Naive thymus-derived CD4-positive, alpha-beta T cell (primary cell): ENCODE measurements at regions of chr4 and their contacts with region 1.

Region 1: GRCh38 chr4:122716825-122717448 is 15.6 kb upstream of the BBS12 start:
- DNase-seq: peak; percentile 20 to 70 (median 63)
- ATAC-seq: peak; percentile 96
- H3K4me3 ChIP-seq: no peak overlapping the region
- H3K4me3 Mint-ChIP-seq: no peak overlapping the region
- H3K27ac ChIP-seq: no peak overlapping the region
- H3K27ac Mint-ChIP-seq: peak overlapping the region in 1 of 9 donors; percentile 46
- H3K4me1 ChIP-seq: peaks cover 0 to 5% of the 10 kb centered on the region in 2 donors
- H3K4me1 Mint-ChIP-seq: peaks cover 0 to 37% (median 12%) of the 10 kb centered on the region in 7 donors
- H3K27me3 ChIP-seq: no peaks in the 10 kb centered on the region
- H3K27me3 Mint-ChIP-seq: peaks cover 0 to 2% (median 0%) of the 10 kb centered on the region in 5 donors

Region 2: DNA sequence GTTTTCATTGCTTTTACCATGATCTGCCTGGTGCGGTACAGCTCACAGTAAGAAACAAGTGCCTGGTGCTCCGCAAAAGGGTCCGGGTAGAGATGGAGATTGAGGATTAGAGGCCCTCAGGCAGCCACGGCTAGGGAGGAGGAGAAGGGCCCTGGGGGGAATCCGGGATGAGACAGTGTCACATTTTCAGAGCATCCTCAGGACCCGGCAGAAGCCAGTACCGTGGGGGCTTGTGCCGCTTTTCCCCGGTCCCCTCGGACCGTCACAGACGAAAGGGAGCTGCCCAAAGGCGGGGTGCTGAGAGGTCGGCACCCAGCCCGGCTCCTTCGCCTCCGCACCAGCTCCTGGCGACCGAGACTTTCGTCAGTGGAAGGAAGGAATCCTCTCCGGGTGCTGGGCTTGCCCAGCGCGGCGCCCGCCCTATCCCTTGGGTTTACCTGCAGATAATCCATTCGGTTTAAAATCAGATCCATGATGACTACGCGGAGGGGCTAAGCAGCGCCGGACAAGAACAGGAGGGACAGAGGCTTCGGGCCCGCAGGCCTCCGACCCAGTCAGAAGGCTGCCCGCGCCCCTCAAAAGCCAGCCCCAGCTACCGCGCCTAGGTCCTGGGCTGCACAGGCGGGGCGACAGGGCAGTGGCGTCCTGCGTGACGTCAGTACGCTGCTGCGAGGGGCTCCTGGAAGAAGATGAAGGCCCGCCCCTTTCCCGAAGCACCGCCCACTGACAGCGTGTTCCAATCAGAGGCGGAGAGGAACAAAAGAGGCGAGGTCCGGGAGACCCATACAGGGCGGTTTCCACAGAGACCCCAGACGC is 846.9 kb before region 1 on chr4 and contains the start of gene BBS7:
- CTCF ChIA-PET with region 1: no interaction called
- POLR2A ChIA-PET with region 1: no interaction called
- intact Hi-C with region 1: loop called in 1 of 2 experiments (anchors 10 kb)
- DNase-seq: peak; percentile 79 to 93 (median 89)
- ATAC-seq: peak; percentile 98
- H3K4me3 ChIP-seq: peak within 1 kb of the TSS; percentile 99
- H3K4me3 Mint-ChIP-seq: peak within 1 kb of the TSS; percentile 88 to 98 (median 97)
- H3K27ac ChIP-seq: peak within 1 kb of the TSS; percentile 77
- H3K27ac Mint-ChIP-seq: peak within 1 kb of the TSS; percentile 69 to 95 (median 90)
- H3K4me1 ChIP-seq: peaks cover 0 to 10% of the 10 kb centered on the region in 2 donors
- H3K4me1 Mint-ChIP-seq: peaks cover 9 to 17% (median 15%) of the 10 kb centered on the region in 7 donors
- H3K27me3 ChIP-seq: no peaks in the 10 kb centered on the region
- H3K27me3 Mint-ChIP-seq: peaks cover 0 to 30% (median 12%) of the 10 kb centered on the region in 5 donors
- total RNA-seq, gene BBS7: 3.7 to 13.1 (median 8.1) TPM

Region 3: DNA sequence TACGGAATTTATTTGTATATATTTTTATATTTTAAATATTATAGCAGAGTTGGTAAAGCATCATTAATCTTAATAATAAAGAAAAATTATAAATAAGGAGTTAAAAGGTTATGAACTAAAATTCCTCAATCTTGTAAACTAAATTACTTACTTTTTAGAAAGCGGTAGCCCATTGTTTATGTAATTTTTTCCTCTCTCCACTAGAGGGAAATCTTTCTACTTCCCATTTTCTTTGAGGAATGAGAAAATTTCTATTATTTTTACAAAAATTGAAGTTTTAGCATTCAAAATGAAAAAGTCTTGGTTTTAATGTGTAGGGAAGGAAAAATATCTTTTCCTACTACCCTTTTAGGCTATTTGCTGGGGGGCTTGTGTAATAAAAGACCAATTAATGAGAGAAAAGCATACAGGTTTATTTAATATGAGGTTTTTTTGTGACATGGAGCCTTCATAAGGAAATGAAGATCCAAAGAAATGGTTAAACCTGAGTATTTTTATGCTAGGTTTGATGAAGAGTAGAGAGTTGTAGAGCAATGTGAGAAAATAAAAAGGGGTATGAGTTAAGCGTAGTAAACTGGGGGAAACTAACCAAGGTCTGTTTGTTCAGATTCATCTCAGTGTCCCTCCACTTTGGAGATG is 406.8 kb before region 1 on chr4:
- CTCF ChIA-PET with region 1: no interaction called
- POLR2A ChIA-PET with region 1: no interaction called
- intact Hi-C with region 1: loop called in 1 of 2 experiments (anchors 2 kb)
- DNase-seq: peak in 3 of 9 donors; percentile 2 to 8 (median 7)
- ATAC-seq: no peak
- H3K4me3 ChIP-seq: no peak overlapping the region
- H3K4me3 Mint-ChIP-seq: no peak overlapping the region
- H3K27ac ChIP-seq: no peak overlapping the region
- H3K27ac Mint-ChIP-seq: no peak overlapping the region
- H3K4me1 ChIP-seq: no peaks in the 10 kb centered on the region
- H3K4me1 Mint-ChIP-seq: peaks cover 0 to 4% (median 0%) of the 10 kb centered on the region in 7 donors
- H3K27me3 ChIP-seq: no peaks in the 10 kb centered on the region
- H3K27me3 Mint-ChIP-seq: no peaks in the 10 kb centered on the region

Region 4: GRCh38 chr4:122602277-122603142 is 114.4 kb before region 1 on chr4:
- CTCF ChIA-PET with region 1: interaction called, 5 read pairs
- POLR2A ChIA-PET with region 1: no interaction called
- intact Hi-C with region 1: loop called (anchors 1 kb)
- DNase-seq: peak in 5 of 9 donors; percentile 13 to 33 (median 24)
- ATAC-seq: peak; percentile 42
- H3K4me3 ChIP-seq: no peak overlapping the region
- H3K4me3 Mint-ChIP-seq: peak overlapping the region in 6 of 10 donors; percentile 3 to 39 (median 26)
- H3K27ac ChIP-seq: no peak overlapping the region
- H3K27ac Mint-ChIP-seq: peak overlapping the region in 2 of 9 donors; percentile 10 to 29
- H3K4me1 ChIP-seq: no peaks in the 10 kb centered on the region
- H3K4me1 Mint-ChIP-seq: peaks cover 0 to 26% (median 5%) of the 10 kb centered on the region in 7 donors
- H3K27me3 ChIP-seq: no peaks in the 10 kb centered on the region
- H3K27me3 Mint-ChIP-seq: peaks cover 0 to 19% (median 0%) of the 10 kb centered on the region in 5 donors

Region 5: GRCh38 chr4:122617597-122618593 is 99.0 kb before region 1 on chr4:
- CTCF ChIA-PET with region 1: interaction called, 3 read pairs
- POLR2A ChIA-PET with region 1: no interaction called
- intact Hi-C with region 1: loop called in 1 of 2 experiments (anchors 5 kb)
- DNase-seq: no peak
- ATAC-seq: no peak
- H3K4me3 ChIP-seq: no peak overlapping the region
- H3K4me3 Mint-ChIP-seq: peak overlapping the region in 7 of 10 donors; percentile 1 to 73 (median 45)
- H3K27ac ChIP-seq: no peak overlapping the region
- H3K27ac Mint-ChIP-seq: peak overlapping the region in 7 of 9 donors; percentile 2 to 85 (median 52)
- H3K4me1 ChIP-seq: no peaks in the 10 kb centered on the region
- H3K4me1 Mint-ChIP-seq: peaks cover 0 to 51% (median 23%) of the 10 kb centered on the region in 7 donors
- H3K27me3 ChIP-seq: no peaks in the 10 kb centered on the region
- H3K27me3 Mint-ChIP-seq: no peaks in the 10 kb centered on the region

Region 6: GRCh38 chr4:122666527-122667245 is 50.3 kb before region 1 on chr4:
- CTCF ChIA-PET with region 1: no interaction called
- POLR2A ChIA-PET with region 1: no interaction called
- intact Hi-C with region 1: loop called (anchors 2 to 5 kb)
- DNase-seq: peak in 2 of 9 donors; percentile 0 to 12
- ATAC-seq: peak; percentile 32
- H3K4me3 ChIP-seq: no peak overlapping the region
- H3K4me3 Mint-ChIP-seq: peak overlapping the region in 1 of 10 donors; percentile 60
- H3K27ac ChIP-seq: no peak overlapping the region
- H3K27ac Mint-ChIP-seq: peak overlapping the region in 4 of 9 donors; percentile 28 to 79 (median 66)
- H3K4me1 ChIP-seq: peaks cover 0 to 3% of the 10 kb centered on the region in 2 donors
- H3K4me1 Mint-ChIP-seq: peaks cover 13 to 75% (median 31%) of the 10 kb centered on the region in 7 donors
- H3K27me3 ChIP-seq: no peaks in the 10 kb centered on the region
- H3K27me3 Mint-ChIP-seq: no peaks in the 10 kb centered on the region

Region 7: DNA sequence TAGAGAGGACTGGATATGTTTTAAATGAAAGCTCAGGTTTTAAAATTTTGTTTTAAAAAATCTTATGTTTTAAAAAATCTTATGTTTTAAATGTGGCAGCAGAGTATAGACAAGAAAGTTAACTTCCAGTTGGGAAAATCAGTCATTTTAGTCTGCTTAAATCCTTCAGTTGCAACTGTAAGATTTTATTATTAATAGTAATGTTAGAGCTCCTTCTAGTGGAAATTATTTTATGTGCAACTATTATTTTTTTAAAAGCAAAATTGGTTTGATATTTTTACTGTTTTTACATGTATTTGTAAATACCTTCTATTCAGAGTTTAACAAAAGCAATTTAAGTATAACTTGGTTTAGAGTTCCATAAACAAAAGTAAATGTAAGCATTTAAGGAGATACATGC is 213.9 kb after region 1 on chr4:
- CTCF ChIA-PET with region 1: interaction called, 4 read pairs
- POLR2A ChIA-PET with region 1: no interaction called
- intact Hi-C with region 1: loop called in 1 of 2 experiments (anchors 1 kb)
- DNase-seq: peak in 3 of 9 donors; percentile 6 to 17 (median 14)
- ATAC-seq: no peak
- H3K4me3 ChIP-seq: no peak overlapping the region
- H3K4me3 Mint-ChIP-seq: no peak overlapping the region
- H3K27ac ChIP-seq: no peak overlapping the region
- H3K27ac Mint-ChIP-seq: no peak overlapping the region
- H3K4me1 ChIP-seq: no peaks in the 10 kb centered on the region
- H3K4me1 Mint-ChIP-seq: peaks cover 0 to 36% (median 7%) of the 10 kb centered on the region in 7 donors
- H3K27me3 ChIP-seq: no peaks in the 10 kb centered on the region
- H3K27me3 Mint-ChIP-seq: no peaks in the 10 kb centered on the region